Endothelial cell of umbilical vein (primary cell): ENCODE measurements at regions of chr1 and their contacts with region 1.

Region 1: DNA sequence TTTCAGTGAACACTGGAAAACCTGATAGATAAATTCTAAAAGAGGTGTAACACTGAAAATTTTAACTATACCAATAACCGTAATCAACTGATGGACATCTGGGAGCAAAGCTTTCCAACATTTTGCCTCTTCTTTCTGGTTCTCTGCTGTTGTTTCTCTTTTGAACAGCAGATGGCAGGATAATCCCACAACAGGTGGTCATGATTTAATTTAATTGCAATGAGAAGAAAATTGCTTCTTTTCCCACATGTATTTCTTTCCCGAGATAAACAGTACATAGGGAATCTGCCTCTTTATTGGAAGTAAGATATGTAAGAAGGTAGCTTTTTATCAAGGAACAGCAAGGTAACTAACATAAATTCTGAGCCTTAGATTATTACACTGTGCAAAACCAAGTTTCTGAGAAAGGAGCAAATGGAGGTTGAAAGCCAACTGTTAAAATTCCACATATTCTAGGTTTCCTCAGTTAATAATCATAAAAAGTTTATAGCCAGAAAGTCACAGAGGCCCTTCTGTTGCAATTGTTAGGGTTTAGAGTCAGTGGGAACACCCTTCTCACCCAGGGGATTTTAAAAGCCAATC is 72.9 kb downstream of the RPS6KA1 start:
- DNase-seq: peak; percentile 76
- H3K4me3 ChIP-seq: no peak overlapping the region
- H3K27ac ChIP-seq: no peak overlapping the region
- H3K4me1 ChIP-seq: no peaks in the 10 kb centered on the region
- H3K27me3 ChIP-seq: peaks cover 25 to 29% of the 10 kb centered on the region in 2 experiments
- CTCF ChIP-seq: peak; percentile 59 to 60
- POLR2A ChIP-seq: no peak

Region 2: GRCh38 chr1:26555550-26556510 is 46.6 kb before region 1 on chr1:
- CTCF ChIA-PET with region 1: no interaction called
- POLR2A ChIA-PET with region 1: no interaction called
- dilution Hi-C with region 1: no loop called
- intact Hi-C with region 1: no loop called
- DNase-seq: no peak
- H3K4me3 ChIP-seq: no peak overlapping the region
- H3K27ac ChIP-seq: no peak overlapping the region
- H3K4me1 ChIP-seq: no peaks in the 10 kb centered on the region
- H3K27me3 ChIP-seq: no peaks in the 10 kb centered on the region
- CTCF ChIP-seq: no peak
- POLR2A ChIP-seq: no peak

Region 3: DNA sequence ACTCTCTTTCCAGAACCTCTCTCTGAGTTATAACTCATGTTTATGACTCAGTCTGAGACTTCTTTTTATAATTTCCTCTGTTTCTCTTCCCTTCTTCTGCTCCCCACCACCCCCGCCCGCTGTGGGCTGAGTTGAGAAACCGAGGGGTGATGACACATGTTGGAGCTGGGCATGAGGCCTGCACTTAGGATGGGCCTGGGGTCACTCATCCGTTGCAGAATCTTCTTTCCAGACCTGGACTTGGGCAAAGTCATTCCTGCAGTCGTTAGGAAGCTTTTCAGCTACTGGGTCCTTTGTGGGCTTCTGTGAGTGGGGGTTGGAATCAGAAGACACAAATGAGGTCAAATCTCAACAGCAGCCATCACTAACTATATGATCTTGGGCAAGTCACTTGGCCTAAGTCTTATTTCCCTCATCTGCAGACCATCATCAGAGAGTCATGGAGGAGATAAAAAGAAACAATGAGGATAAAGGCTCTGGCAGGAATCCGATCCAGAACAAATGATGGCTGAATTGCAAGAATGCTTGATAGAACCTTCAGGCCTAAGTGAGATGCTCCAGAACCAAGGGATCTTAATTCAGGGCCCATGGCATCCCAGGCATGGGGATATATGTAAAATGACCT is 19.5 kb before region 1 on chr1:
- CTCF ChIA-PET with region 1: interaction called, 10 read pairs
- POLR2A ChIA-PET with region 1: no interaction called
- dilution Hi-C with region 1: no loop called
- intact Hi-C with region 1: no loop called
- DNase-seq: no peak
- H3K4me3 ChIP-seq: no peak overlapping the region
- H3K27ac ChIP-seq: no peak overlapping the region
- H3K4me1 ChIP-seq: no peaks in the 10 kb centered on the region
- H3K27me3 ChIP-seq: peaks cover 0 to 5% of the 10 kb centered on the region in 2 experiments
- CTCF ChIP-seq: no peak
- POLR2A ChIP-seq: no peak

Region 4: GRCh38 chr1:26695356-26696118 is 93.1 kb after region 1 on chr1 and contains the start of gene ARID1A:
- CTCF ChIA-PET with region 1: interaction called, 30 read pairs
- POLR2A ChIA-PET with region 1: no interaction called
- dilution Hi-C with region 1: no loop called
- intact Hi-C with region 1: loop called (anchors 1 kb)
- DNase-seq: peak; percentile 98
- H3K4me3 ChIP-seq: peak within 1 kb of the TSS; percentile 56 to 83 (median 81)
- H3K27ac ChIP-seq: peak within 1 kb of the TSS; percentile 74
- H3K4me1 ChIP-seq: peaks cover 50% of the 10 kb centered on the region
- H3K27me3 ChIP-seq: no peaks in the 10 kb centered on the region
- CTCF ChIP-seq: peak in 1 of 2 donors; percentile 12
- POLR2A ChIP-seq: peak; percentile 86
- total RNA-seq, gene ARID1A: 67.0 and 77.2 TPM in 2 replicates

Region 5: DNA sequence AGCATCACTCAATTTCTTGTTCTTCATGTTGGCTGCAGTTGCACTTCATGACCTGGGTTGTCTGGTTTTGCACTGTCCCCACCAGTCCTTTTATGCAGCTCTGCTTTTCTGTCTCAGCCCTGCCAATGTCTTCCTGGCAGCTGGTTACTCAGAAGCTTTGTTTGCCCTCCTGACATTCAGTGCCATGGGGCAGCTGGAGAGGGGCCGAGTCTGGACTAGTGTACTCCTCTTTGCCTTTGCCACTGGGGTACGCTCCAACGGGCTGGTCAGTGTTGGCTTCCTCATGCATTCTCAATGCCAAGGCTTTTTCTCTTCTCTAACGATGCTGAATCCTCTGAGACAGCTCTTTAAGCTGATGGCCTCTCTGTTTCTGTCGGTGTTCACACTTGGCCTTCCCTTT is 191.9 kb after region 1 on chr1:
- CTCF ChIA-PET with region 1: interaction called, 428 read pairs
- POLR2A ChIA-PET with region 1: no interaction called
- dilution Hi-C with region 1: no loop called
- intact Hi-C with region 1: loop called (anchors 1 kb)
- DNase-seq: no peak
- H3K4me3 ChIP-seq: no peak overlapping the region
- H3K27ac ChIP-seq: no peak overlapping the region
- H3K4me1 ChIP-seq: no peaks in the 10 kb centered on the region
- H3K27me3 ChIP-seq: no peaks in the 10 kb centered on the region
- CTCF ChIP-seq: no peak
- POLR2A ChIP-seq: no peak

Region 6: DNA sequence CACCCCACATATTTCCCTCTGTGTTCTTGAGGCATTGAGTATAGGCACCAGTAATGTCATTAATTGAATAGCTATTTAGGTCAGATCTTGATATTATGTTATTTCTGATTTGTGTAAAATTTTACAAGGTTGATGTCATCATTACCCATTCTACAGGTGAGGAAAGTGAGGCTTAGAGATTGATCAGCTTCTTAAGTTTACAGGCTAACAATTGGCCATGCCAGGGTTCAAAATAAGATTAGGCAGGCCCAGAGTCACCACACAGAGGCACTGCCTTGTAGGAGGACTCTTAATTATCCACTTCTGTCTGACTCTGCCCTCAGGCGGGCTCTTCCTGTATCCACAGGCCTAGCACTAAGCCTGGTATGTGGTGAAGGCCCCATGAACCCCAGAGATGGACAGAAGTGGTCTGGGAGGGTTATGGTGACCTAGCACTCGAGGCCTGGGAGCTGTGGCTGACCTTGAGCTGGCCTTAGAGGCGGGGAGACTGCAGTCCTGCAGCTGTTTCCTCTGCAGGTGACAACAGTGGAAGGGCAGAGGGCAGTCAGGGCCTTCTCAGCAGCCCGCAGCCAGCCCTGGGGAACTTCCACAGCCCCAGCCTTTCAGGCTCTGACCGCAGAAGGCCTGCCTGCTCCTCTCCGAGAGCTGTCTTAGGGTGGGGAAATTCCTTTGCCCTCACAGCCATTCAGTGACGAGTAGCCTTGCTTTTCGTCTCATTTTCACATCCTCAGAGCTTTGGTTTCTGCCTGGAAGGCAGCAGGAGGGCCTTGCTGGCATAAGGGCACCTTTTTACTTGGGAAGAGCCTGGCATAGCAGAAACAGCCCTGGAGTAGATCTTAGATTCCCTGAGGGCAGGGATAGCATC is 236.2 kb after region 1 on chr1:
- CTCF ChIA-PET with region 1: no interaction called
- POLR2A ChIA-PET with region 1: no interaction called
- dilution Hi-C with region 1: no loop called
- intact Hi-C with region 1: no loop called
- DNase-seq: no peak
- H3K4me3 ChIP-seq: no peak overlapping the region
- H3K27ac ChIP-seq: no peak overlapping the region
- H3K4me1 ChIP-seq: no peaks in the 10 kb centered on the region
- H3K27me3 ChIP-seq: no peaks in the 10 kb centered on the region
- CTCF ChIP-seq: no peak
- POLR2A ChIP-seq: no peak

Region 7: GRCh38 chr1:26853156-26853555 is 250.7 kb after region 1 on chr1:
- CTCF ChIA-PET with region 1: interaction called, 20 read pairs
- POLR2A ChIA-PET with region 1: no interaction called
- dilution Hi-C with region 1: no loop called
- intact Hi-C with region 1: no loop called
- DNase-seq: peak; percentile 79
- H3K4me3 ChIP-seq: no peak overlapping the region
- H3K27ac ChIP-seq: no peak overlapping the region
- H3K4me1 ChIP-seq: peaks cover 9% of the 10 kb centered on the region
- H3K27me3 ChIP-seq: no peaks in the 10 kb centered on the region
- CTCF ChIP-seq: peak; percentile 85 to 89
- POLR2A ChIP-seq: no peak

Region 8: GRCh38 chr1:26882696-26883463 is 280.4 kb after region 1 on chr1:
- CTCF ChIA-PET with region 1: interaction called, 43 read pairs
- POLR2A ChIA-PET with region 1: no interaction called
- dilution Hi-C with region 1: no loop called
- intact Hi-C with region 1: loop called (anchors 1 kb)
- DNase-seq: no peak
- H3K4me3 ChIP-seq: no peak overlapping the region
- H3K27ac ChIP-seq: no peak overlapping the region
- H3K4me1 ChIP-seq: no peaks in the 10 kb centered on the region
- H3K27me3 ChIP-seq: no peaks in the 10 kb centered on the region
- CTCF ChIP-seq: no peak
- POLR2A ChIP-seq: no peak

Region 9: GRCh38 chr1:26907071-26907917 is 304.8 kb after region 1 on chr1:
- CTCF ChIA-PET with region 1: no interaction called
- POLR2A ChIA-PET with region 1: no interaction called
- dilution Hi-C with region 1: no loop called
- intact Hi-C with region 1: no loop called
- DNase-seq: peak; percentile 53
- H3K4me3 ChIP-seq: no peak overlapping the region
- H3K27ac ChIP-seq: no peak overlapping the region
- H3K4me1 ChIP-seq: no peaks in the 10 kb centered on the region
- H3K27me3 ChIP-seq: peaks cover 0 to 1% of the 10 kb centered on the region in 2 experiments
- CTCF ChIP-seq: no peak
- POLR2A ChIP-seq: no peak